Activated CD4-positive, alpha-beta memory T cell treated with anti-CD3 and anti-CD28 coated beads, Interleukin-2, amount 10 ng/mL, durations not matched to agents 7 days and 5 days (primary cell): ENCODE measurements at regions of chr5 and their contacts with region 1.

Region 1: DNA sequence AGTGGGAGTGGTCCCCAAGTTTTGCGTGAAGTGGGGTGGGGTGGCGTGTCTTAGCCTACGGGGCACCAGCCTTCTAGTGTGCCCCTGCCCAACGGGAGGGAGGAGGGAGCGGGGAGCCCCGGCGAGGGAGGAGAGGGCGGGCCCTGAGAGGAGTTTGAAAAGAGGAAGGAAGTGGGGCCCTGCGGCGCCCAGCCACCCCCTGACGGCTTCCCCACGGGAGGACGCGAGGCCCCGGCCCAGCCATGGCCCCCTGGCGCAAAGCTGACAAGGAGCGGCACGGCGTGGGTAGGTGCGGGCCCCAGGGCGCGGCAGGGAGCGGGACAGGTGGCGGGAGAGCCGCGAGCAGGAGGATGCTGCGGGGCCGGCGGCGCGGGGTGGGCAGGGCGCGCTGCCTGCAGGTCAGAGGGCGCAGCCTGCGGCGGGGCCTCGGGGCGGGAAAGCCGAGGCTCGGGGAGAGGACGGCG is at the start of gene DOCK2:
- DNase-seq: peak; percentile 79
- H3K4me3 Mint-ChIP-seq: peak within 1 kb of the TSS; percentile 90
- H3K27ac Mint-ChIP-seq: peak within 1 kb of the TSS; percentile 95
- H3K4me1 Mint-ChIP-seq: peaks cover 52% of the 10 kb centered on the region
- H3K27me3 Mint-ChIP-seq: peaks cover 10% of the 10 kb centered on the region
- total RNA-seq, gene DOCK2: 248 to 270 TPM

Region 2: DNA sequence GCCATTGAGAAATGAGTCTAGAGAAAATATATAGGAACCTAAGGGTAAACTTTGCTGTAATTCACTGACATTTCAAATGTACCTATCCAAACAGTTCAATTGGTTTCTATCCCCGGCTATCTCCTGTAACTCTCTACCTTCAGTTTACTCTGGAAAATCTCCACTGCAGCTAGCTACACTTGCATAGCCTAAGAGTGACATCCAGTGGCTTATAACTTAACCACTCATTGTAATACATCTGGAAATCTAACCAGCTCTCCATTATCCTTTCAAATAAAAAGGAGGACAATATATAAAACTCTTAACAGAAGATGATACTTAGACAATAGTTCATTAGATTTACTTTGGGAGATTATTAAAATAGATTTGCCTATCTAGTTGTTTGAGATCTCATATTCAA is 88.8 kb before region 1 on chr5:
- CTCF ChIA-PET with region 1: no interaction called
- POLR2A ChIA-PET with region 1: no interaction called
- DNase-seq: no peak
- H3K4me3 Mint-ChIP-seq: no peak overlapping the region
- H3K27ac Mint-ChIP-seq: no peak overlapping the region
- H3K4me1 Mint-ChIP-seq: no peaks in the 10 kb centered on the region
- H3K27me3 Mint-ChIP-seq: peaks cover 60% of the 10 kb centered on the region

Region 3: DNA sequence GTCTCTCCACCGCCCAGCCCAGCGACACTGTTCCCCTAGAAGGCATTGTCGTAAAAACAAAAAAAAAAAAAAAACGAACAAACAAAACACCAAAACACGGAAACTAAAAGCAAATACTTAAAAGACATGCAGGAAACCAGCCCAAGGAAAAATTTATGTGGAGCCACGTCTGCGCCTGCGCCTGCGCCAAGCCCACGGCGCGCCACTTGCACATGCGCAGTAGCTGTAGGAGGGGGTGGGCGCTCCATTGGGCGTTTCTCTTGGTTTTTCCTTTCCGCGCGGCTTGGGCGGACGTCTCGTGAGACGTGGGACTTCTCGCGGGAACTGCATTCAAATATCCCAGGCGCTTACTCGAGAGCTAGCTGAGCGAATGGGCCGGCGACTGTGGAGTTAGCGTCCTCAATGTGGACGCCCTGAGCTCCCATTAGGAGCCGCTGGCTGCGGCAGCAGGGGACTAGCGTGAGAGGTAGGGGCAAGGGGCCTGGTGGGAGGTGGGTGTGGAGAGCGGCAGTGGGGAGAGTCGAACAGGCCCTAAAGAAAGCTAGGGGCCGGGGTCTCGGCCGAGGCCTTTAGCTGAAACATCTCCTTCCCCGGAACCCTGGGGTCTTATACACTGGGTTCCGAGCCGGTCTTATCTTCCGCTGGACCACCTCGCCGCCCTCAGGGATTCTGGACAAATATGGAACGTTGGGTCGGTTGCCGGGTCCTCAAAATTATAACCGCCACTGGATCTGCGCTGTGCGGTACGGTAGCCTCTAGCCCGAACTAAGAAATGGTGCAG is 53.5 kb before region 1 on chr5 and contains the start of gene SPDL1:
- CTCF ChIA-PET with region 1: interaction called, 13 read pairs
- POLR2A ChIA-PET with region 1: interaction called, 83 read pairs
- DNase-seq: peak; percentile 96
- H3K4me3 Mint-ChIP-seq: peak within 1 kb of the TSS; percentile 96
- H3K27ac Mint-ChIP-seq: peak within 1 kb of the TSS; percentile 82
- H3K4me1 Mint-ChIP-seq: peaks cover 42% of the 10 kb centered on the region
- H3K27me3 Mint-ChIP-seq: peaks cover 6% of the 10 kb centered on the region
- total RNA-seq, gene SPDL1: 37.8 to 39.8 TPM

Region 4: GRCh38 chr5:169650701-169651331 is 13.7 kb after region 1 on chr5:
- CTCF ChIA-PET with region 1: interaction called, 15 read pairs
- POLR2A ChIA-PET with region 1: interaction called, 116 read pairs
- DNase-seq: no peak
- H3K4me3 Mint-ChIP-seq: peak overlapping the region; percentile 48
- H3K27ac Mint-ChIP-seq: peak overlapping the region; percentile 88
- H3K4me1 Mint-ChIP-seq: peaks cover 99% of the 10 kb centered on the region
- H3K27me3 Mint-ChIP-seq: no peaks in the 10 kb centered on the region

Region 5: GRCh38 chr5:169656125-169656901 is 19.2 kb after region 1 on chr5:
- CTCF ChIA-PET with region 1: interaction called, 15 read pairs
- POLR2A ChIA-PET with region 1: interaction called, 116 read pairs
- DNase-seq: peak; percentile 50
- H3K4me3 Mint-ChIP-seq: peak overlapping the region; percentile 39
- H3K27ac Mint-ChIP-seq: peak overlapping the region; percentile 82
- H3K4me1 Mint-ChIP-seq: peaks cover 68% of the 10 kb centered on the region
- H3K27me3 Mint-ChIP-seq: no peaks in the 10 kb centered on the region

Region 6: GRCh38 chr5:169695919-169696490 is 58.9 kb after region 1 on chr5:
- CTCF ChIA-PET with region 1: no interaction called
- POLR2A ChIA-PET with region 1: no interaction called
- DNase-seq: no peak
- H3K4me3 Mint-ChIP-seq: no peak overlapping the region
- H3K27ac Mint-ChIP-seq: no peak overlapping the region
- H3K4me1 Mint-ChIP-seq: peaks cover 11% of the 10 kb centered on the region
- H3K27me3 Mint-ChIP-seq: no peaks in the 10 kb centered on the region